ENCODE measurements at regions of chr10 and their contacts with region 1.

Region 1: GRCh38 chr10:125060826-125061556 is 99.4 kb downstream of the CTBP2 start:
- DNase-seq: peak; percentile 89
- H3K4me3 ChIP-seq: no peak overlapping the region
- H3K27ac ChIP-seq: peak overlapping the region; percentile 72 to 91 (median 84)
- H3K4me1 ChIP-seq: peaks cover 83 to 94% (median 86%) of the 10 kb centered on the region in 4 donors
- H3K27me3 ChIP-seq: no peaks in the 10 kb centered on the region
- CTCF ChIP-seq: peak; percentile 73 to 90 (median 85)
- EP300 ChIP-seq: no peak
- POLR2A ChIP-seq: no peak

Region 2: GRCh38 chr10:124916585-124917427 is 144.2 kb before region 1 on chr10:
- in situ Hi-C with region 1: no loop called
- intact Hi-C with region 1: loop called (anchors 10 kb)
- DNase-seq: peak; percentile 99
- H3K4me3 ChIP-seq: peak overlapping the region; percentile 89 to 99 (median 94)
- H3K27ac ChIP-seq: peak overlapping the region; percentile 98 to 100 (median 99)
- H3K4me1 ChIP-seq: peaks cover 4 to 44% (median 18%) of the 10 kb centered on the region in 4 donors
- H3K27me3 ChIP-seq: no peaks in the 10 kb centered on the region
- CTCF ChIP-seq: no peak
- EP300 ChIP-seq: no peak
- POLR2A ChIP-seq: peak; percentile 96

Region 3: GRCh38 chr10:125084191-125084613 is 23.2 kb after region 1 on chr10:
- in situ Hi-C with region 1: no loop called
- intact Hi-C with region 1: no loop called
- DNase-seq: no peak
- H3K4me3 ChIP-seq: no peak overlapping the region
- H3K27ac ChIP-seq: peak overlapping the region; percentile 11 to 51 (median 23)
- H3K4me1 ChIP-seq: peaks cover 0 to 18% (median 0%) of the 10 kb centered on the region in 4 donors
- H3K27me3 ChIP-seq: no peaks in the 10 kb centered on the region
- CTCF ChIP-seq: no peak
- EP300 ChIP-seq: no peak
- POLR2A ChIP-seq: no peak

Region 4: DNA sequence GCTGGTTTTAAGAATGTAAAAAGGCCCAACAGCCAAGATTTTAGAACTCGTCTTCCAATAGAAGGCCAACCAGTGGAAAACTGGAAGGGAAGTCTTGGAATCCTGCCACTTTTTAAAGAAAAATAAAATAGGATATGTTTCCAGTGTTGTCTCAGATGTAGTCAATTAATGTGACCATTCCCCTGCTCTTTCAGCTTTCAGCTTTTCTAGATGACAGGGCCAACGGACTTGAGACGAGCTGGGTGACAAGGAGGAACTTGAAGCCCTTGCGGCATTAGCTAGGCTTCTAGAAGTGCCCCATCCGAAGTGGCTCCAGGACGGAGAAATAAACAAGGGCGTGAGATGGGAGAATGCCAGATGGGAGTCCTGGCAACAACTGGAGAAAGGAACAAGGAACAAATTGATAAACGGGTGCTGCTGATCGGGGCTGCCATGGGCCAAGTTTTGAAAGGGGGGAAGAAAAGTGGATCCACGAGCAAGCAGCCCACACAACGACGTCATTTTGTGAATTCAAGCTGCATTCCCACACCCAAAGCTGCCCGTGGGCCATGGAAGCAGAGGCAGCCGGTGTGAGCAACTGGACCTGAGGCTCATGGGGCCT is 57.1 kb after region 1 on chr10:
- in situ Hi-C with region 1: no loop called
- intact Hi-C with region 1: loop called (anchors 10 kb)
- DNase-seq: peak; percentile 59
- H3K4me3 ChIP-seq: no peak overlapping the region
- H3K27ac ChIP-seq: peak overlapping the region; percentile 61 to 72 (median 68)
- H3K4me1 ChIP-seq: peaks cover 22 to 71% (median 53%) of the 10 kb centered on the region in 4 donors
- H3K27me3 ChIP-seq: no peaks in the 10 kb centered on the region
- CTCF ChIP-seq: no peak
- EP300 ChIP-seq: no peak
- POLR2A ChIP-seq: no peak

Region 5: GRCh38 chr10:125160856-125161706 is 100.1 kb after region 1 on chr10:
- in situ Hi-C with region 1: loop called in 1 of 4 experiments (anchors 25 kb)
- intact Hi-C with region 1: no loop called
- DNase-seq: peak; percentile 72
- H3K4me3 ChIP-seq: peak overlapping the region; percentile 79 to 97 (median 94)
- H3K27ac ChIP-seq: peak overlapping the region; percentile 98 to 99 (median 99)
- H3K4me1 ChIP-seq: peaks cover under 1 to 32% (median 22%) of the 10 kb centered on the region in 4 donors
- H3K27me3 ChIP-seq: no peaks in the 10 kb centered on the region
- CTCF ChIP-seq: peak; percentile 47 to 52 (median 48)
- EP300 ChIP-seq: no peak
- POLR2A ChIP-seq: peak; percentile 36